Activated CD4-positive, alpha-beta T cell treated with anti-CD3 and anti-CD28 coated beads, Interleukin-2, amount 10 ng/mL, durations not matched to agents 24 days and 14 days (primary cell): ENCODE measurements at regions of chrX and their contacts with region 1.

Region 1: DNA sequence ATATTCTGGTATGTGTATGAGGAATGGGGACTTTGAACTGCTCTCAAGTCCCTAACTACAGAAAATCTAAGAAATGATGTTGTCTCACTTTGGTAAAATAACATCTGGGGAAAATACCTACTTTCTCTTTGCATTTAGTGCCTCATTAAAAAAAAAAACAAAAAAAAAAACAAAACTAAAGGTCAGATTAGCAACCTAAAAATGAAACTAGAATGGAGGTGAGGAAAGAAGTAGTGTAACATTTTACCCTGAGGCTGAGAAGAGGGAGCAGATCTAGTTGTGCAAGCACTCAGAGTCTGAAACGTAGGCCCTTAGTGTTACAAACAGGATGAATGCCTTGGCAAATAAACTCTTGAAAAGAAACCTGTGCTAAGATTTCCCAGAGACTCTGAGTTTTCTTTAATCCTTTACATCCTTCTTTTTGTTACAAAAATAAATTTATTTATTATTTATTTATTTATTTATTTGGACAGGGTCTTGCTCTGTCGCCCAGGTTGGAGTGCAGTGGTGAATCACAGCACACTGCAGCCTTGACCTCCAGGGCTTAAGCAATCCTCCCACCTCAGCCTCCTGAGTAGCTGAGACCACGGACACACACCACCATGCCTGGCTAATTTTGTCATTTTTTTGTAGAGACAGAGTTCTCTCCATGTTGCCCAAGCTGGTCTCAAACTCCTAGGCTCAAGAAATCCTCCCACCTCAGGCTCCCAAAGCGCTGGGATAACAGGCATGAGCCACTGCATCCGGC is 56.2 kb downstream of the VGLL1 start:
- DNase-seq: peak; percentile 63
- H3K4me3 Mint-ChIP-seq: peak overlapping the region; percentile 62
- H3K27ac Mint-ChIP-seq: peak overlapping the region; percentile 87
- H3K4me1 Mint-ChIP-seq: peaks cover 49% of the 10 kb centered on the region
- H3K27me3 Mint-ChIP-seq: no peaks in the 10 kb centered on the region

Region 2: DNA sequence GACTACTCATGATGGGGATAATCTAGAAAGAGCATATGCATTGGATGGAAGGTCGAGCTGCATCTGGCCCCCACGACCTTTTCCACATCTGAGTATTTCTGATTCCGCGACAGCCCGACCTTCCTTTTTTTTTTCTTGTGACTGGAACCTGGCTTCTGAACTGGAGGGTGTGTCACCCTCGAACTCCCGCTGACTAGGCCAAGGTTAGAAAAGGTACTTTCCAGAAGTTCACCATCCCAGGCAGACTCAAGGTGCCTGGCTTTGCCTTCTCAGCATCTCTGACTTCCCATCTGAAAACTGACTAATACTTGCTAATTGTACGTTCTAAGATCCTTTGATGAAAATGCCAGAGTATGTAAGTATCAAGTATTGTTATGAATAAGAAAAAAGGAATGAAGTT is 10.4 kb after region 1 on chrX:
- intact Hi-C with region 1: loop called (anchors 1 kb)
- DNase-seq: peak; percentile 71
- H3K4me3 Mint-ChIP-seq: peak overlapping the region; percentile 58
- H3K27ac Mint-ChIP-seq: peak overlapping the region; percentile 85
- H3K4me1 Mint-ChIP-seq: peaks cover 37% of the 10 kb centered on the region
- H3K27me3 Mint-ChIP-seq: no peaks in the 10 kb centered on the region

Region 3: DNA sequence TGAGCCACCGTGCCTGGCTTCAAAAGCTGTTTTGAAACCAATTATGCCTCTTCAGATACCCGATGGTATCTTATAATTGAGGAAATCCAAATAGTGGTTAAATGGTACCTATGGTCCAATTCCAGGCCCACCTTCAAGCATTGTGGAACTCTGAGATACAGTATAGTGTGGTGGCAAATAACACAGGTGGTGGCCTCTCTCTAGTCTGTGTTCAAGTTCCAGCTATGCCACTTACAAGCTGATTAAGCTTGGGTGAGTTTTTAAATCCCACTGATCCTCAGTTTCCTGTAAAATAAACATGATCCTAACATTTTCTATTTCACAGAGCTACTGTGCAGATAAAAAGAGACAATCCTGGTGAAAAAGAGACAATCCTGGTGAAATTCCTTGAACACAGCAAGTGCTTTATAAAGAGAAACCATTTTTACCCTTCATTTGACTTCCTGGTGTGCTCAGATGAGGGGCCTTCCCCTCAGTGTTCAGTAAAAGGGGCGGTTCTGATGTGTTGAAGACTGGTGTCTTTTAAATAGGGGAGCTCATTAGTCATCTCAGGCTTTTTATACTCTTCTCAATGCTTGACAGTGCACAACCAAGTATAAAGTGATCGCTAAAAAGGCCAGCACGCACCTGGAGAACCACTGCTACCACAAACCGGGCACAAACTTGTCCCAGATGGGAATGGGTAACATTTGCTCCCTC is 28.9 kb after region 1 on chrX:
- intact Hi-C with region 1: loop called (anchors 2 kb)
- DNase-seq: peak; percentile 77
- H3K4me3 Mint-ChIP-seq: peak overlapping the region; percentile 41
- H3K27ac Mint-ChIP-seq: peak overlapping the region; percentile 88
- H3K4me1 Mint-ChIP-seq: peaks cover 46% of the 10 kb centered on the region
- H3K27me3 Mint-ChIP-seq: no peaks in the 10 kb centered on the region

Region 4: GRCh38 chrX:136627409-136627808 is 39.2 kb after region 1 on chrX:
- intact Hi-C with region 1: loop called (anchors 1 kb)
- DNase-seq: peak; percentile 79
- H3K4me3 Mint-ChIP-seq: peak overlapping the region; percentile 57
- H3K27ac Mint-ChIP-seq: peak overlapping the region; percentile 96
- H3K4me1 Mint-ChIP-seq: peaks cover 75% of the 10 kb centered on the region
- H3K27me3 Mint-ChIP-seq: no peaks in the 10 kb centered on the region

Region 5: GRCh38 chrX:136652822-136653723 is 64.9 kb after region 1 on chrX:
- intact Hi-C with region 1: loop called (anchors 1 kb)
- DNase-seq: peak; percentile 80
- H3K4me3 Mint-ChIP-seq: peak overlapping the region; percentile 98
- H3K27ac Mint-ChIP-seq: peak overlapping the region; percentile 98
- H3K4me1 Mint-ChIP-seq: peaks cover 45% of the 10 kb centered on the region
- H3K27me3 Mint-ChIP-seq: no peaks in the 10 kb centered on the region

Region 6: DNA sequence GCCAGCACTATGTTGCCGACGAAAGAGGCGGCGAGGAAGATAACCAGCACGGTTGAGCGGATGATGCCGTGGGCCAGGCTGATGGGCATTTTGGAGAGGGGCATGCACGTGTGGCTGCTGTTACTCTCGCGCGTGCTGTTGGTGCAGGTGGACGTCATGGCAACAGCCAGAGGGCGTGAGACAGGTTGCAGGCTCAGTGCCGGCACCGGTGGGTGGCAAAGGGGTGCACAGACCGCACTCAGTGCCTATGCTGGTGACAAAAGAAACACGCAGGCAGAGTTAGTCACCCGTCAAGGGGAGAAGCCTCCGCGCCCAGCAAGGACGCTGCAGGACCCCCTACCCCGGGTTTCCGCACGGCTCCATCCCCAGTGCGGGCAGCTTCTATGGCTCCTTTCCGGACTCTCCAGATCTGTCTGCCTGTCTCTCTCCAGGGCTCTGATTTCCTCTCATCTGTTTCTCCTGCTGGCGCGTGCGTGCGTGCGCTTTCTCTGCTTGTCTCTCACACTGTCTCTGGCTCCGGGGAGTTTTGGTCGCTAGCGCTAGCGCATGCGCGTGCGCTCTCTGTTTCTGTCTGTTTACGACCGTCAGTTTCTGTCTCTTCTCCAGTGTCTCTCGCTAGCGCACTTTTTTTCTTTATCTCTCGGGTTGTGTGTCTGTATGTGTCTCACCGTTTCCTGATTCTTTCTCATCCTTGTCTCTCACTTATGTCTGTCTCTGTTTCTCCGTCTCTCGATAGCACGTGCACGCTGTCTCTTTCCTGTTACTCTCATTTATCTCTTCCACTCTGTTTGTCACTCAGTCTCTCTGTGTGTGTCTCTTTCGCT is 443.5 kb after region 1 on chrX:
- intact Hi-C with region 1: loop called (anchors 5 kb)
- DNase-seq: peak; percentile 84
- H3K4me3 Mint-ChIP-seq: no peak overlapping the region
- H3K27ac Mint-ChIP-seq: no peak overlapping the region
- H3K4me1 Mint-ChIP-seq: peaks cover 11% of the 10 kb centered on the region
- H3K27me3 Mint-ChIP-seq: peaks cover 65% of the 10 kb centered on the region

Region 7: DNA sequence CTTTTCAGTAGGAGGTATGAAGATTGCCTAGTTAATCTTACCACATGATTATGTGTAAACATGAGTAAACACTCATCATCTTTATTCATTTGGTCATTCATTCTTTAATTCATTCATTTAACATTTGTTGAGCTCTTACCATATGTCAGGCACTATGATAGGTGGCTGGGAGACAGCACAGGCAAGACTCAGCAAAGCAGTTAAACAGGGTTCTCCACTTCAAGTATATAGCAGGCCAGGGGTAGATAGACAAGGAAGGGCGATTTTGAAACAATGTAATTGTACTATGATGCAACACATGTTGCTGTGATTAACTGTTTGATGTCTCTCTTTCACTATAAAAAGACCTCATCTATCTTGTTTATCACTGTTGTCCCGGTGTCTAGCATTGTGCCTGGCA is 529.9 kb after region 1 on chrX:
- intact Hi-C with region 1: no loop called
- DNase-seq: no peak
- H3K4me3 Mint-ChIP-seq: no peak overlapping the region
- H3K27ac Mint-ChIP-seq: no peak overlapping the region
- H3K4me1 Mint-ChIP-seq: no peaks in the 10 kb centered on the region
- H3K27me3 Mint-ChIP-seq: peaks cover 2% of the 10 kb centered on the region